Heart right ventricle (tissue), 16 donors: ENCODE measurements at regions of chr5 and their contacts with region 1.

Region 1: DNA sequence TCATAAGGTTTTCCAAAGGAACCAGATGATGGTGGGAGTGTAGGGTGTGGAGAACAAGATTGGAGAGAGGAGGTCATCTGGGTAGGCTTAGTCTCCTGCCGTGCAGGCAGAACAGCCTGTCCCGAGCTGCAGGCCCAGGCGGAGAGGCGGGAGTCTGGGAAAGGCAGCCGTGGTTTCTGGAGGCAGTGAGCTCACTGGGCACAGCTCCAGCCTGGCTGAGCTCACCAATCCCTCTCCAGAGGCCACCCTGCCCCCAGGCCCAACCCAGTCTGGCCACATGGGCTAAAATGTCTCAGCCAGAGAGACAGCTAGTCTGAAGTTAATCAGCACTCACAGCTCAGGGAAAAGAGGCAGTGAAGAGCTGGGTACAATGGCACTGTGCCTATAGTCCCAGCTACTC is 12.3 kb downstream of the P4HA2 start:
- DNase-seq: peak; percentile 93
- ATAC-seq: peak; percentile 93 to 95 (median 94)
- H3K4me3 ChIP-seq: no peak overlapping the region
- H3K27ac ChIP-seq: peak overlapping the region; percentile 76 to 92 (median 86)
- H3K4me1 ChIP-seq: peaks cover 13 to 93% (median 78%) of the 10 kb centered on the region in 9 donors
- H3K27me3 ChIP-seq: no peaks in the 10 kb centered on the region
- CTCF ChIP-seq: no peak

Region 2: DNA sequence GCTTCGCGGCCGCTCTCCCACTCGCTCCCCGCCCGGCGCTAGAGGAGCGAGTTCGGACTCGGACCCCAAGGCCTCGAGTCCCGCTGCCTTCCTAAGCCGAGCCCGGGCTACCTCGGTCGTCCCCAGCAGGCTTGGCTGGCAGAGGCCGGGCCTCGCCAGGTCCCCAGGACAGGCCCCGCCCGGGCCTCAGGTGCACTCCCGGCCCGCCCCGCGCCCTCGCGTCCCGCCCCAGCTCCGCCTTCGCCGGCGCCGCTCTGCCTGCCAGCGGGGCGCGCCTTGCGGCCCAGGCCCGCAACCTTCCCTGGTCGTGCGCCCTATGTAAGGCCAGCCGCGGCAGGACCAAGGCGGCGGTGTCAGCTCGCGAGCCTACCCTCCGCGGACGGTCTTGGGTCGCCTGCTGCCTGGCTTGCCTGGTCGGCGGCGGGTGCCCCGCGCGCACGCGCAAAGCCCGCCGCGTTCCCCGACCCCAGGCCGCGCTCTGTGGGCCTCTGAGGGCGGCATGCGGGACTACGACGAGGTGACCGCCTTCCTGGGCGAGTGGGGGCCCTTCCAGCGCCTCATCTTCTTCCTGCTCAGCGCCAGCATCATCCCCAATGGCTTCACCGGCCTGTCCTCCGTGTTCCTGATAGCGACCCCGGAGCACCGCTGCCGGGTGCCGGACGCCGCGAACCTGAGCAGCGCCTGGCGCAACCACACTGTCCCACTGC is 154.3 kb after region 1 on chr5 and contains the start of gene SLC22A5:
- intact Hi-C with region 1: loop called in 2 of 10 experiments (anchors 10 kb)
- DNase-seq: peak in 1 of 2 donors; percentile 73
- ATAC-seq: peak; percentile 81 to 87 (median 86)
- H3K4me3 ChIP-seq: peak within 1 kb of the TSS; percentile 51 to 82 (median 72)
- H3K27ac ChIP-seq: peak within 1 kb of the TSS; percentile 70 to 92 (median 90)
- H3K4me1 ChIP-seq: peaks cover 3 to 55% (median 21%) of the 10 kb centered on the region in 9 donors
- H3K27me3 ChIP-seq: no peaks in the 10 kb centered on the region
- CTCF ChIP-seq: no peak
- total RNA-seq, gene SLC22A5: 10.3 to 36.8 (median 12.5) TPM

Region 3: DNA sequence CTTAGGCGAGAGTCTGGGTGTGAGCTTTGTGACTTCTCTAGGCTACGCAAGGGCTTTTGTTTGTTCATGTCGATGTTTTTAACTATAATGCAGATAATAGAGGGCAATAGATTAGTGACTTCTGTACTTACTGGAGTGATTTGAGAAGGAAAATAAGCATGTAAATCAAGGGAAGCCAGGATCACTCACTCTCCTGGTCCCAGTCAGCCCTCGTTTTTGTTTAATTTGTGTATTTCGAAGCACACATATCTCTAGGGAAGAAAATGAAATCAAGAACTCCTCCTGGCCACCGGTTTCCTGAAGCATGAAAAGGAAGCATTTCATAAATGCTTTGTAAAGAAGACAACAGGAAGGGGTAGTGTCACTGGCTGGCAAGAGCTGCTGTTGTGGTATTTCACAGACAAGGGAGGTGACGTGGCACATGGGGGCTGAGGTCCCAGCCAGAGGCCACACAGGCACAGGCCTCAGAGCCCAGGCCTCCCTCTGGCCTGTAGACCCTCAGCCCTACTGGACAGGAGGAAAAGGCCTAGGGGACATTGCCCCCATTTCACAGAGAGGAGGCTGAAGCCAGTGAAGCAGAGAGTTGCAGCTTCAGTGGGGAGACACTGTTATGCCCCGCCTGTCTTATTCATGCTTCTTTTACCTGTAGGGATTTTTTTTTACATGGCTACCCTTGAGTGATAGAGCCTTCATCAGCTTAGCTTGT is 241.1 kb after region 1 on chr5:
- intact Hi-C with region 1: no loop called
- DNase-seq: peak in 1 of 2 donors; percentile 48
- ATAC-seq: peak in 7 of 8 donors; percentile 37 to 67 (median 56)
- H3K4me3 ChIP-seq: peak overlapping the region in 1 of 10 donors; percentile 24
- H3K27ac ChIP-seq: peak overlapping the region; percentile 15 to 96 (median 66)
- H3K4me1 ChIP-seq: peaks cover 8 to 94% (median 60%) of the 10 kb centered on the region in 9 donors
- H3K27me3 ChIP-seq: no peaks in the 10 kb centered on the region
- CTCF ChIP-seq: no peak